ENCODE measurements at regions of chr21 and their contacts with region 1.

Region 1: GRCh38 chr21:44497703-44498126 is 42.3 kb downstream of the KRTAP10-1 start:
- DNase-seq: peak in 1 of 4 donors; percentile 34
- ATAC-seq: peak; percentile 37
- H3K4me3 ChIP-seq: no peak overlapping the region
- H3K27ac ChIP-seq: peak overlapping the region in 1 of 2 donors; percentile 42
- H3K4me1 ChIP-seq: no peaks in the 10 kb centered on the region
- H3K27me3 ChIP-seq: peaks cover 0 to 47% of the 10 kb centered on the region in 2 donors
- CTCF ChIP-seq: no peak

Region 2: GRCh38 chr21:44331650-44332307 is 165.9 kb before region 1 on chr21:
- intact Hi-C with region 1: no loop called
- DNase-seq: peak in 1 of 4 donors; percentile 64
- ATAC-seq: no peak
- H3K4me3 ChIP-seq: no peak overlapping the region
- H3K27ac ChIP-seq: no peak overlapping the region
- H3K4me1 ChIP-seq: peaks cover 0 to 4% of the 10 kb centered on the region in 2 donors
- H3K27me3 ChIP-seq: no peaks in the 10 kb centered on the region
- CTCF ChIP-seq: no peak

Region 3: DNA sequence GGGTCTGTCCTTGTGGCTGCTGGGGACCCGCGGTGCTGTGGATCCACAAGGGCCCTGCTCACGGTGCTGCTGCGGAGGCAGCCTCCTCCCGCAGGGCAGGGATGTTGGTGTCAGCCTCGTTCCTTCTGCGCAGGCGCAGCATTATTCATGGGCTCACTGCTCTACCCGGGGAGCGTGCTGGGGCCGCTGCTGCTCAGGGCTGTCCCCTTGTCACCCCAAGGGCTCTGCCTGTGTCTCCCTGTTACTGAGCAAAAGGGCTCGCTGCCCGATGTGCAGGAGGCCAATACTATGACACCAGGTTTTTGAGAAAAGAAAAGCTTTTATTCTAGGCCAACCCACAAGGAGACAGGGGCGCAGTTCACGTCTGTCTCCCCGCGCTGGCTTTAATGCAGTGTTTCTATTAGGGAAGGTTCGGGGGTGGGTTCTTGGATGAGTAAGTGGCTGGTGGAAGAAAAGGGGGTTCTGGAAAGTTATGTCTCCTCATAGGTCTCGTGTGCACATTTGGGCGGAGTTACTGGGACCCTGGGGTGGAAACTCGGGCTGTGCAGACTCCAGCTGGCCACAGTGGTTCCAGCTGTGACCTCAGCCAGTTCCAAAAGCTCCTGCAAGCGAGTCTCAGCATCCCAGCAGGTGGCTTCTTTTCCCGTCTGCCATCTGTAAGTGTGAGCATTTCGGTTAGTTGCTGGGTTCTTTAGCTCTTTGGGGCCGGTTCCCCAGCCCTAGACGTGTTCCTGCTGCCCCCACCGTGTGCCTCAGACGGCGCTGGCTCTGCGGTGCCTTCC is 83.2 kb before region 1 on chr21:
- intact Hi-C with region 1: loop called in 1 of 2 experiments (anchors 5 kb)
- DNase-seq: peak in 3 of 4 donors; percentile 13 to 47 (median 18)
- ATAC-seq: no peak
- H3K4me3 ChIP-seq: no peak overlapping the region
- H3K27ac ChIP-seq: no peak overlapping the region
- H3K4me1 ChIP-seq: no peaks in the 10 kb centered on the region
- H3K27me3 ChIP-seq: peaks cover 0 to 22% of the 10 kb centered on the region in 2 donors
- CTCF ChIP-seq: no peak